ENCODE measurements at regions of chr16 and their contacts with region 1.

Region 1: DNA sequence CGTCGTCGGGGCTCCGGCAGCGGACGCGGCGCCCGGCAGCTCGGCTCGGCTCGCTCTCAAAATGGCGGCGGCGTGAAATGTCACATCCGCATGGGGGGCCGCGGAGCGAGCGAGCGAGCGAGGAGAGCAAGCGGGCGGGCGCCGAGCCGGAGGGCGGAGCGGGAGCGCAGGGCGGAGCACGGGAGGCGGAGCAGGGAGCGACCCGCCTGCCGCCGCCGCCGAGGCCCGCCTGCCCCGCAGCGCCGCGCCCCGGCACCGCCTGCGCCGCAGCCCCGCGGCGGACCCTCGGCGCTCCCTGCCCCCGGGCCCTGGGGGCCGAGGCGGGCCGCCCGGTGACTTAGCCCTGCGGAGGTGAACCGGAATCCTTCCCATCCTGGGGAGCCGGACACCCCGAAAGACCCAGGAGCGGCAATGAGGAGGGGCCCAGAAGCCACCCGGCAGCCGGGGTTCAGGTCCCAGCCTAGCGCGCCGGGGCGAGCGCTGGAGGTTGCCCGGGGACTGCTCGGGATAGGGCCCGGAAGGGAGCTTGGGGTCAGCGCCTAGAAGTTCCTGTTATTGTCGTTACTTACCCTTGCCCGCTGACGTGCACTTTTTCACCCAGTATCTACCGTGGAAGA is at the start of gene USP7:
- DNase-seq: no peak
- ATAC-seq: peak; percentile 86
- H3K4me3 ChIP-seq: peak within 1 kb of the TSS; percentile 80
- H3K27ac ChIP-seq: peak within 1 kb of the TSS; percentile 85
- H3K4me1 ChIP-seq: peaks cover 8% of the 10 kb centered on the region
- H3K27me3 ChIP-seq: no peaks in the 10 kb centered on the region
- CTCF ChIP-seq: peak in 1 of 3 experiments; percentile 13; a peak in 1 of 6 replicates
- EP300 ChIP-seq: no peak
- POLR2A ChIP-seq: peak; percentile 89
- RAD21 ChIP-seq: no peak
- polyA plus RNA-seq, gene USP7: 20.8 to 25.0 TPM

Region 2: DNA sequence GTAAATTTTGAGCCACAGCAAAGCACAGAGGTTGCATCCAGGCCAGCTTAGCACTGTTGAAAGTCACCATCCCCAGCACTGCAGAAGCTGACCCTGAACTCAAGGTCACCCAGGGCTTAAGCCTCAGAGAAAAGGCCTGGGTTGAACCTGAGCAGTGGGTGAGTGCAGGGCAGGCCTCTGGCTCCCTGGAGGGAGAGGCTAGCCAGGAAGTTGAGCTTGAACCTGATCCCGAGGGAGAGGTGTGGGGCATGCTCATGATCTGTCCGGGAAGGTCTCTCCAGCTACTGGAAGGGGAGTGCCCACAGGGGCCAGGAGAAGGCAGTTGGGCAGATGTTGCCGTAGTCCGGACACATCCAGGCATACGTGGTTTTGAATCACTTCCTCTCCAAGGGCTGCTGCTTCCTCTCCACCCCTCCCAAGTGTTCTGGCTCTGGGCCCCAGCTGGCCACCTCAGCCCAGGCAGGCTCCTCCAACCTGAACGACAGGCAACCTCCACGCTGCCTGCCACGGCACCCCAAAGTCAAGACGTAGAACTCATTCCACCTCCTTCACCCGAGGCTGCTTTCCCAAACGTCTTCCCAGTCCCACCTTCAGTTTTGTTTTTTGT is 113.6 kb before region 1 on chr16:
- CTCF ChIA-PET with region 1: no interaction called
- POLR2A ChIA-PET with region 1: no interaction called
- RAD21 ChIA-PET with region 1: no interaction called
- SMC1A ChIA-PET with region 1: no interaction called
- in situ Hi-C with region 1: no loop called
- intact Hi-C with region 1: no loop called
- DNase-seq: no peak
- ATAC-seq: peak; percentile 35
- H3K4me3 ChIP-seq: no peak overlapping the region
- H3K27ac ChIP-seq: peak overlapping the region; percentile 24; the same call in 1 of the 2 replicates
- H3K4me1 ChIP-seq: no peaks in the 10 kb centered on the region; the same call in 1 of the 2 replicates
- H3K27me3 ChIP-seq: no peaks in the 10 kb centered on the region
- CTCF ChIP-seq: no peak
- EP300 ChIP-seq: no peak
- POLR2A ChIP-seq: peak; percentile 54
- RAD21 ChIP-seq: no peak

Region 3: DNA sequence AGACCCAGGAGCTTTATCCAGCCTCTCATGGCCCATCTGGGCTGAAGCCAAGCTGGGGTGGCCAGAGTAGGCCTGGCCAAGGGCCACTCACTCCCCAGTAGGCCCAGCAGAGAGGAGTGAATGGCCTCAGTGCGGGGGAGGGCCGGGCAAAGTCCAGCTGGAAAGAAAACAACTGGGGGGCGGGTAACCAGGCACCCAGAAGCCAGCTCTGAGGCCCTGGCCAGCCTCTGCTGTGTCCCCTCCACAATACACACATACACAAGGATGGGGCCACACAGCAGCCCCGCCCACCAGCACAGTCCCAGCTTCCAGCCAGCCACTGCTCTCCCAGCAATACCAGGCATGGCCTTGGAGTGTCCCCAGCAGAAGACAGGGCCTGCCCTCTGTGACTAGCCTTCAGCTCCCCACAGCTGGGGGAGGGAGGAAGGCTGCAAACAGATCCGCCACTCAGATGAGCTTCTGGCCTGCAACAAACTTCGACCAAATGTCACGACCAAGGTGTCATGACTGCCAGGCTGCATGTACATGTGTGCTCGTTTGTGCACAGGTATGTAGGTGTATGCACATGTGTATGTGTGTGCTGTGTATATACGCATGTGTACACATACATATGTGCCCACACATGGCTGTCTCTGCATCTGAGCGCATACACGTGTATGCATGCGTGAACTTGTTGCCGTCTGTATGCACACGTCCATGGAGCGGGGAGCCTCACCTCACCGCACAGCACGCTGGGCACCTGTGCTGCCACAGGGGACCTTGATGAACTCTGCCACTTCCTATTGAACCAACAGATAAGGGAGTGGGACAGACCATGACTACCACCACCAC is 100.1 kb before region 1 on chr16:
- CTCF ChIA-PET with region 1: no interaction called
- POLR2A ChIA-PET with region 1: no interaction called
- RAD21 ChIA-PET with region 1: no interaction called
- SMC1A ChIA-PET with region 1: no interaction called
- in situ Hi-C with region 1: no loop called
- intact Hi-C with region 1: no loop called
- DNase-seq: no peak
- ATAC-seq: peak; percentile 9; the same call in 2 of the 3 replicates
- H3K4me3 ChIP-seq: no peak overlapping the region
- H3K27ac ChIP-seq: no peak overlapping the region
- H3K4me1 ChIP-seq: peaks cover 6% of the 10 kb centered on the region; the same call in 1 of the 2 replicates
- H3K27me3 ChIP-seq: no peaks in the 10 kb centered on the region
- CTCF ChIP-seq: no peak
- EP300 ChIP-seq: no peak
- POLR2A ChIP-seq: peak; percentile 58
- RAD21 ChIP-seq: no peak

Region 4: DNA sequence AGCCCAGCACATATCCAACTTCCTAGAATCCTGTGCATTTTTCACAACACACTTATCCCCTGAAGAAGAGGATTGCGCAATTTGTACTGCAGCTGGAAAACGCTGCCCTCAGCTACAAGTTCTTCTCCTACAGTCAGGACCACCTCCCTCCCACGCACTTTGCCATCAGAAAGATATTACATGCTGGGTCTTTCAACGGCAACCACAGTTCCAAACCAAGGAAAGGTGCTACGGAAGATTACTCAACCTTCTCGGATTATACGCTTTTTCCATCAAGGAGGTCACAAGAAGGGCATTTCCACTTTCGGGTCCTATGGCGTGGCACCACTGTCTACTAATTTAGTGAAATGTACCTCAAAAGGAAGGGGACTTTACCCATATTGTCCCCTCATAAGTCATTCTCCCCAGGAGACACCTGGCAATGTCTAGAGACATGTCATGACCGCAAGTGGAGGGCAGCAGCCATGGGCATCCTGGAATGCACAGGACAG is 35.4 kb before region 1 on chr16:
- CTCF ChIA-PET with region 1: interaction called, 31 read pairs
- POLR2A ChIA-PET with region 1: no interaction called
- RAD21 ChIA-PET with region 1: no interaction called
- SMC1A ChIA-PET with region 1: interaction called, 7 read pairs
- in situ Hi-C with region 1: no loop called
- intact Hi-C with region 1: loop called (anchors 5 kb)
- DNase-seq: peak; percentile 59
- ATAC-seq: peak; percentile 61
- H3K4me3 ChIP-seq: no peak overlapping the region
- H3K27ac ChIP-seq: peak overlapping the region; percentile 37; the same call in 1 of the 2 replicates
- H3K4me1 ChIP-seq: peaks cover 47% of the 10 kb centered on the region
- H3K27me3 ChIP-seq: no peaks in the 10 kb centered on the region
- CTCF ChIP-seq: no peak
- EP300 ChIP-seq: peak in 1 of 2 experiments; percentile 17; a peak in 1 of 4 replicates
- POLR2A ChIP-seq: no peak
- RAD21 ChIP-seq: no peak

Region 5: DNA sequence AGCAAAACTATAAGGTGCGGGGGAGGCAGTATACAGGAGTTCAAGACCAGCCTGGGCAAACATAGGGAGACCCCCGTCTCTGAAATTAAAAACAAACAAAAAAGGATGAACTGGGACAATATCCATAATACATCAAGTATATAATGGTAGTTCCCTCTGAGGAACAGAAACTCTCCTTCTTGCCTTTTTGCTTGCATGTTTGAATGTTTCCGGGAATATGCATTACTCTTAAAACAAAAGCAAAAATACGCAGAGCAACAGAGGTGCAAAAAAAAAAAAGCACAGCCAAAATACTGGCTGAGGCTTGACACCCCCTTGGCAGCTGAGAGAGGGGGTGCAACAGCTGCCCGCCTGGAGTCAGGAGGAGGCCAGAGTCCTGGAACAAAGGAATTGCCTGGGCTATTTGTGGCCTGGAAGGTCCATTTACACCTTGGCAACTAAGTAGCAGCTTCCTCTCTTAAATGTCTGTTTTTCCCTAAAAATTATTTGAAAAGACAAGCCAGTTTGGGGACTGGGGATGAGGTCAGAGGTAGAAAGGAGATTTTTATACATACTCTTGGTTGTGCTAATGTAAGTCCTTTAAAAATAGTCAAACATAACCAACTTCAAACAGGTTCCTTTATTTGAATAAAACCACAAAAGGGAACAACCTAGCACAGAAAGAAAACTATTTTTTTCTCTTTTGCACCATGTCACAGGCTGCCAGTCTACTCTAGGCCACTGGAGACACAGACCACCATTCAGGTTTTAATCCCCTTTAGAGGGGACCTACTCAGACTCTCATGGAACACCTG is 19.8 kb before region 1 on chr16:
- CTCF ChIA-PET with region 1: interaction called, 12 read pairs
- POLR2A ChIA-PET with region 1: interaction called, 6 read pairs
- RAD21 ChIA-PET with region 1: interaction called, 21 read pairs
- SMC1A ChIA-PET with region 1: interaction called, 52 read pairs
- in situ Hi-C with region 1: no loop called
- intact Hi-C with region 1: loop called (anchors 2 kb)
- DNase-seq: peak; percentile 58
- ATAC-seq: peak; percentile 82
- H3K4me3 ChIP-seq: peak overlapping the region; percentile 68
- H3K27ac ChIP-seq: peak overlapping the region; percentile 63
- H3K4me1 ChIP-seq: peaks cover 73% of the 10 kb centered on the region
- H3K27me3 ChIP-seq: no peaks in the 10 kb centered on the region
- CTCF ChIP-seq: no peak
- EP300 ChIP-seq: 0 out of 4 replicates have a peak, but pooled peaks of 1 of the 2 experiments have one; percentile 29
- POLR2A ChIP-seq: no peak
- RAD21 ChIP-seq: no peak

Region 6: DNA sequence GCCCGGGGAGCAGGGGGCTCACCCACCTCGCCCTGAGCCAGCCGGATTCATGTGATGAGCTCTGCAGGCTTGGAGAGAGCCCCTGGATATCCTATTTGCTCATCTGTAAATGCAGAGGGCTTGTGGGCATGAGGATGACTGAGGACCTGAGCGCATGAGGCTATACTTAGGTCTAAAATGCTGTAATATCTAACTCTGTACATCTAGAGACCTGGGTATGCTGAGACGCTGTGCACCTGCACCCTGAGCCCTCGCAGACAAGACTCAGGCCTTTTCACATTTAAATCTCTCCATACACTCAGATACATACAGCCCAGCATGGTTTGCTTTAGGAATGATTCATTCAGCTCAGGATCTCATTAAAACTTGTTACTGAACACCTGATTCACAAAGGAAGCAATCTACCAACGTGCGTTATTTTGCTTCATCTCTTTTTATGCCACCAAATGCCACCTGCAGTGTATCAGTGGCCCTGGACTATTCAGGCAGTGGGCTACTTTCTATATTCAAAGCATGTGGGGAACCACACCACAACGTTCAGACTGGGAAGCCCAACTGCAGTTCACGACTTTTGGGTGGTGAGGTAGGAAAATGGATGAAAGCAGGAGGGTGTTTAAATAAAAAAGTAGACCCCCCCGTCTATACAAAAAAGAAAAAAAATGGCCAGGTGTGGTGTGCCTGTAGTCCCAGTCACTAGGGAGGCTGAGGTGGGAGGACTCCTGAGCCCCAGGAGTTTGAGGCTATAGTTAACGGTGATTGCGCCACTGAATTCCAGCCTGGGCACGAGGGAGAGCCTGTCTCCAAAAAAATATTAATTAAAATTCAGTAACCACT is 12.3 kb before region 1 on chr16:
- CTCF ChIA-PET with region 1: interaction called, 12 read pairs
- POLR2A ChIA-PET with region 1: interaction called, 6 read pairs
- RAD21 ChIA-PET with region 1: interaction called, 21 read pairs
- SMC1A ChIA-PET with region 1: interaction called, 52 read pairs
- in situ Hi-C with region 1: no loop called
- intact Hi-C with region 1: loop called (anchors 1 kb)
- DNase-seq: no peak
- ATAC-seq: peak; percentile 39
- H3K4me3 ChIP-seq: peak overlapping the region; percentile 26; the same call in 1 of the 2 replicates
- H3K27ac ChIP-seq: peak overlapping the region; percentile 52
- H3K4me1 ChIP-seq: peaks cover 71% of the 10 kb centered on the region
- H3K27me3 ChIP-seq: no peaks in the 10 kb centered on the region
- CTCF ChIP-seq: no peak
- EP300 ChIP-seq: no peak
- POLR2A ChIP-seq: 0 out of 2 replicates have a peak, but pooled peaks have one; percentile 29
- RAD21 ChIP-seq: no peak

Region 7: DNA sequence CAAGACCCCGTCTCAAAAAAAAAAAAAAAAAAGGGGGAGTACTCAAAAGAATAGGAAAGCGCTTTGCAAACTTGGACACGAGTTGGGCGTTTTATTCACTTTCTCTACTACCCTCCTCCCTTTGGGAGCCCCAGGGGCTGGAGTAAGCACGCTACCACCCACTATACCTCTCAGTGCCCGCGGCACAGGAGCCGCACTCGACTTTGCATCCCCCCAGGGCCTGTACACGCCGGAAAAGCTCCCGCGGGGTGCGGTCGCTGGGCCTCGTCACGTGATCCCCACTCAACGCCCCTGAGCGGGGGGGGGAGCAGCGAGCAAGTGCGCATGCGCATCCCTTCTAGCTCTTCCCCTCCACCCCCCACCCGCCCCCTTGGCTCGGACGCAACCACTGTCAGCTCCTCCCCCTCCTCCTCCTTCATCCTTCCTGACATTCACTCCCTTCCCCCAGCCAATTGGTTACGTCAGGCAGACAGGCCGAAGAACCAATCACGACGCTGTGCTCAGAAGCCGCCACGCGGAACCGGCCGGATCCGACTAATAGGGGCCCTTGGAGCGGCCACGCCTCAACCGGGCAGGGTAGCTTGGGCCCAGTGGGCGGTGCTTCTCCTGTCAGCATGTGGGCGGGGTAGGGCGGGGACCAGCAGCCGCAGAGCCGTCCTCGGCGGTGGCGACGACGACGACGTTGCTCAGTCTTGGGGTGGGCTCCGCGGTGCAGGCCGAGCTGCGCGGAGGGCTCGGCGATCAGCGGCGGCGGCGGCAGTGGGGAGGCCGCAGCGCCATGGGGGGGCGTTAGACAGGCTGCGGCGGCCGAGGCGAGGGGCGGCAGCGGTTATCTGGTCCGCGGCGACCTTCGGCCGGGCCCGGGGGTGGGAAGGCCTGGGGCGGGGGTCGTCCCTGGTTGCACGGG is 127.3 kb after region 1 on chr16 and contains the start of gene HAPSTR1:
- CTCF ChIA-PET with region 1: interaction called, 4 read pairs
- POLR2A ChIA-PET with region 1: interaction called, 3 read pairs
- RAD21 ChIA-PET with region 1: interaction called, 4 read pairs
- SMC1A ChIA-PET with region 1: no interaction called
- in situ Hi-C with region 1: no loop called
- intact Hi-C with region 1: loop called (anchors 5 kb)
- DNase-seq: peak; percentile 99
- ATAC-seq: peak; percentile 93
- H3K4me3 ChIP-seq: peak within 1 kb of the TSS; percentile 81
- H3K27ac ChIP-seq: peak within 1 kb of the TSS; percentile 90
- H3K4me1 ChIP-seq: peaks cover 6% of the 10 kb centered on the region
- H3K27me3 ChIP-seq: no peaks in the 10 kb centered on the region
- CTCF ChIP-seq: no peak
- EP300 ChIP-seq: no peak; a peak in 1 of 4 replicates
- POLR2A ChIP-seq: peak; percentile 98
- RAD21 ChIP-seq: no peak
- polyA plus RNA-seq, gene HAPSTR1: 8.7 to 12.5 TPM

Region 8: DNA sequence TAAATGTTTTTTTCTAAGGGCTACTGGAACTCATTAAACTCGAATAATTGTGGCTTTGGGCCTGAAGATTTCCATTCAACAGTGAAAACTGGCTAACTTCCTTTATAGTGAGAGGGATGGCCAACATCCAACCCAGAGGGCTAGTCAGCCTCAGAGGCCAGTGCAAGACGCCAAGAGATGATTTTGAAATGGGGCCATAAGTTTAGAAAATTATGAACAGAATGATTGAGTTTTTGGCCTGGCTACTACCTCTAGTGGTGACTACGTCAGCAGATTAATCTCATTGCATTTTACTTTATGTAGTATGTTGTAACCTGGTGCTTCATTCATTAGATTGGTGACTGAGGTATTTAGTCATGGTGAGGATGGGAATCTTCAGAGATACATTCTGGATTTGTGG is 155.9 kb after region 1 on chr16:
- CTCF ChIA-PET with region 1: no interaction called
- POLR2A ChIA-PET with region 1: no interaction called
- RAD21 ChIA-PET with region 1: no interaction called
- SMC1A ChIA-PET with region 1: no interaction called
- in situ Hi-C with region 1: no loop called
- intact Hi-C with region 1: no loop called
- DNase-seq: no peak
- ATAC-seq: no peak
- H3K4me3 ChIP-seq: no peak overlapping the region
- H3K27ac ChIP-seq: no peak overlapping the region
- H3K4me1 ChIP-seq: peaks cover 7% of the 10 kb centered on the region
- H3K27me3 ChIP-seq: no peaks in the 10 kb centered on the region
- CTCF ChIP-seq: 0 out of 6 replicates have a peak, but pooled peaks of 1 of the 3 experiments have one; percentile 3
- EP300 ChIP-seq: no peak
- POLR2A ChIP-seq: no peak
- RAD21 ChIP-seq: no peak